ENCODE measurements at regions of chr20 and their contacts with region 1.

Region 1: GRCh38 chr20:21505161-21505809 is 8.6 kb downstream of the NKX2-2 start:
- DNase-seq: peak; percentile 69
- ATAC-seq: peak; percentile 57
- H3K4me3 Mint-ChIP-seq: peak overlapping the region; percentile 38
- H3K27ac Mint-ChIP-seq: no peak overlapping the region
- H3K4me1 Mint-ChIP-seq: peaks cover 24% of the 10 kb centered on the region
- H3K27me3 Mint-ChIP-seq: peaks cover 63% of the 10 kb centered on the region
- CTCF ChIP-seq: peak; percentile 35

Region 2: GRCh38 chr20:20360464-20360863 is 1144.8 kb before region 1 on chr20:
- CTCF ChIA-PET with region 1: no interaction called
- POLR2A ChIA-PET with region 1: no interaction called
- intact Hi-C with region 1: loop called (anchors 5 kb)
- DNase-seq: no peak
- ATAC-seq: peak; percentile 79
- H3K4me3 Mint-ChIP-seq: no peak overlapping the region
- H3K27ac Mint-ChIP-seq: no peak overlapping the region
- H3K4me1 Mint-ChIP-seq: peaks cover 30% of the 10 kb centered on the region
- H3K27me3 Mint-ChIP-seq: peaks cover 42% of the 10 kb centered on the region
- CTCF ChIP-seq: peak; percentile 50

Region 3: DNA sequence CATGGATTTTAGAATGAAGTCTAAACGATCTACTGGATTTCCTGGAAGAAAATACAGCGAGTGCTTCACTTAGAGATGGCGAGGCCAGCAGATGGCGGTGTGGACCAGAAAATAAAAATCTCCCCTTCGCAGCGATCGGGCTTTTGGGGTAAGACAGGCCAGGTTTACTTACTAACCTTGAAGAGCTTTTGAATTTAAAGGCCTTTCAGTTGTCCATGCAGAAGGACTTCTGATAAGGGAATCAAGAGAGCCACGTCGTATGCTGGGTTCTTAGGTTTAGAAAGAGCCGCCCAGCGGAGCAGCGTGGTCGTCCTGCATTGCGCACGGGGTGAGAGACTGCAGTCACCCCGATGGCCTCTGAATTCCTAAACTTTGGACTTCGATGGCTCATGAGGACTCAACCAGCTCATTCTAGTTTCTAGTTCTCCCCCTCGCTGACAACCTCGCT is 667.7 kb before region 1 on chr20:
- CTCF ChIA-PET with region 1: interaction called, 12 read pairs
- POLR2A ChIA-PET with region 1: no interaction called
- intact Hi-C with region 1: loop called (anchors 1 kb)
- DNase-seq: no peak
- ATAC-seq: no peak
- H3K4me3 Mint-ChIP-seq: no peak overlapping the region
- H3K27ac Mint-ChIP-seq: no peak overlapping the region
- H3K4me1 Mint-ChIP-seq: peaks cover 2% of the 10 kb centered on the region
- H3K27me3 Mint-ChIP-seq: peaks cover 32% of the 10 kb centered on the region
- CTCF ChIP-seq: no peak

Region 4: GRCh38 chr20:21099751-21100577 is 405.3 kb before region 1 on chr20:
- CTCF ChIA-PET with region 1: no interaction called
- POLR2A ChIA-PET with region 1: no interaction called
- intact Hi-C with region 1: loop called (anchors 2 kb)
- DNase-seq: peak; percentile 42
- ATAC-seq: peak; percentile 57
- H3K4me3 Mint-ChIP-seq: peak overlapping the region; percentile 88
- H3K27ac Mint-ChIP-seq: peak overlapping the region; percentile 83
- H3K4me1 Mint-ChIP-seq: peaks cover 36% of the 10 kb centered on the region
- H3K27me3 Mint-ChIP-seq: peaks cover 72% of the 10 kb centered on the region
- CTCF ChIP-seq: no peak

Region 5: GRCh38 chr20:21395666-21396598 is 109.4 kb before region 1 on chr20:
- CTCF ChIA-PET with region 1: interaction called, 4 read pairs
- POLR2A ChIA-PET with region 1: no interaction called
- intact Hi-C with region 1: loop called (anchors 2 kb)
- DNase-seq: peak; percentile 31
- ATAC-seq: peak; percentile 7
- H3K4me3 Mint-ChIP-seq: peak overlapping the region; percentile 61
- H3K27ac Mint-ChIP-seq: no peak overlapping the region
- H3K4me1 Mint-ChIP-seq: peaks cover 16% of the 10 kb centered on the region
- H3K27me3 Mint-ChIP-seq: peaks cover 63% of the 10 kb centered on the region
- CTCF ChIP-seq: no peak